CD8-positive, alpha-beta memory T cell (primary cell): ENCODE measurements at regions of chrX and their contacts with region 1.

Region 1: DNA sequence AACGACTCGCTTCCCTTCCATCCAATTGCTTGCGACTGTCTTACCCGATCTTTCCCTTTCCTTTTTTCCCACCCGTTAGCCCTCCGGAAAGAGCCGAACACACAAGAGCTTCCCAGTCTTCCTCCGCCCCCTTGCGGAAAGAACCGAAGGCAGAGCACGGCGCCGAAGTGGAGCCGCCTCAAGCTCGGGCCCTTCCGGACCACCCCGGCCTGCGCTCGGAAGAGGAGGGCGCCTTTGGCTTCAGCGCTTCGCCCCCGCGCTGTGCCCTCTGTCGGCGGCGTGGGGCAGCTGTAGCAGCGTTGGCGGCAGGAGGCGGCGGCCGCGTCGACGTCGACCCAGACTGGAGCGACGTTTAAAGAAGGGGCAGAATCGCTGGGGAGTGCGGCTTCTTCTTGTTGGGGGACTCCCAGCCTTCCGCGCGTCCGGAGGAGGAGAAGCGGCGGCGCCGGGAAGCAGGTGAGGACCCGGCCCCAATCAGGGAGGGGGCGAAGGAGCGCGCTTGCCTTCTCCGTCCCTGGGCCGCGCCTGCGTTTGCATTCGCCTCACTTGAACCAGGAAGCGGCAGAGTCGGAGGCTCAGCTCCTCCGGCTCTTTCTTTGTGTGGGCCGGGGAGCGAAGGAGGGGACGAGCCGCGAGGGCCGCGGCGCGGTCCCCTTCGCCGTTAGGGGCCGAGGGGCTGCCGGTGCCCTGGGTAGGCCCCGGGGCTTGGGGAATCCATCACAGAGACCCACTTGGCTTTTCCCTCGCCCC is at the start of gene ZBTB33:
- DNase-seq: peak; percentile 78 to 90 (median 83)
- H3K4me3 ChIP-seq: peak within 1 kb of the TSS; percentile 78
- H3K4me3 Mint-ChIP-seq: peak within 1 kb of the TSS; percentile 90 to 96 (median 94)
- H3K27ac ChIP-seq: peak within 1 kb of the TSS; percentile 78
- H3K27ac Mint-ChIP-seq: peak within 1 kb of the TSS; percentile 86 to 99 (median 96)
- H3K4me1 ChIP-seq: peaks cover 7% of the 10 kb centered on the region
- H3K4me1 Mint-ChIP-seq: peaks cover 27 to 43% (median 42%) of the 10 kb centered on the region in 3 donors
- H3K27me3 ChIP-seq: no peaks in the 10 kb centered on the region
- H3K27me3 Mint-ChIP-seq: no peaks in the 10 kb centered on the region
- total RNA-seq, gene ZBTB33: 16.4 to 16.8 TPM

Region 2: GRCh38 chrX:120274958-120275357 is 24.3 kb after region 1 on chrX:
- CTCF ChIA-PET with region 1: no interaction called
- POLR2A ChIA-PET with region 1: no interaction called
- DNase-seq: no peak
- H3K4me3 ChIP-seq: no peak overlapping the region
- H3K4me3 Mint-ChIP-seq: no peak overlapping the region
- H3K27ac ChIP-seq: no peak overlapping the region
- H3K27ac Mint-ChIP-seq: no peak overlapping the region
- H3K4me1 ChIP-seq: peaks cover under 1% of the 10 kb centered on the region
- H3K4me1 Mint-ChIP-seq: peaks cover under 1 to 1% (median under 1%) of the 10 kb centered on the region in 3 donors
- H3K27me3 ChIP-seq: no peaks in the 10 kb centered on the region
- H3K27me3 Mint-ChIP-seq: peaks cover 0 to 3% of the 10 kb centered on the region in 2 donors

Region 3: GRCh38 chrX:120308959-120309872 is 58.5 kb after region 1 on chrX:
- CTCF ChIA-PET with region 1: interaction called, 43 read pairs
- POLR2A ChIA-PET with region 1: interaction called, 11 read pairs
- DNase-seq: peak; percentile 58 to 87 (median 67)
- H3K4me3 ChIP-seq: peak overlapping the region; percentile 63
- H3K4me3 Mint-ChIP-seq: peak overlapping the region; percentile 80 to 91 (median 87)
- H3K27ac ChIP-seq: no peak overlapping the region
- H3K27ac Mint-ChIP-seq: peak overlapping the region in 7 of 8 donors; percentile 1 to 90 (median 85)
- H3K4me1 ChIP-seq: peaks cover 5% of the 10 kb centered on the region
- H3K4me1 Mint-ChIP-seq: peaks cover 32 to 49% (median 35%) of the 10 kb centered on the region in 3 donors
- H3K27me3 ChIP-seq: no peaks in the 10 kb centered on the region
- H3K27me3 Mint-ChIP-seq: peaks cover 10 to 22% of the 10 kb centered on the region in 2 donors